ENCODE measurements at regions of chr17 and their contacts with region 1.

Region 1: GRCh38 chr17:7014261-7014994 is 2.0 kb downstream of the RNASEK start:
- DNase-seq: peak; percentile 98 to 99 (median 98)
- H3K4me3 ChIP-seq: peak overlapping the region; percentile 61 to 98
- H3K4me3 Mint-ChIP-seq: peak overlapping the region; percentile 92 to 98 (median 97)
- H3K27ac ChIP-seq: peak overlapping the region; percentile 96
- H3K27ac Mint-ChIP-seq: peak overlapping the region; percentile 98 to 100 (median 100)
- H3K4me1 ChIP-seq: peaks cover 69% of the 10 kb centered on the region
- H3K4me1 Mint-ChIP-seq: peaks cover 42 to 94% (median 61%) of the 10 kb centered on the region in 4 donors
- H3K27me3 ChIP-seq: no peaks in the 10 kb centered on the region
- H3K27me3 Mint-ChIP-seq: no peaks in the 10 kb centered on the region

Region 2: GRCh38 chr17:7035591-7036368 is 21.4 kb after region 1 on chr17 and contains the start of gene SLC16A13:
- CTCF ChIA-PET with region 1: interaction called, 4 read pairs
- POLR2A ChIA-PET with region 1: interaction called, 39 read pairs
- intact Hi-C with region 1: loop called (anchors 2 kb)
- DNase-seq: peak; percentile 97 to 100 (median 98)
- H3K4me3 ChIP-seq: peak within 1 kb of the TSS; percentile 32 to 81
- H3K4me3 Mint-ChIP-seq: peak within 1 kb of the TSS; percentile 90 to 96 (median 94)
- H3K27ac ChIP-seq: peak within 1 kb of the TSS; percentile 87
- H3K27ac Mint-ChIP-seq: peak within 1 kb of the TSS; percentile 97 to 99 (median 98)
- H3K4me1 ChIP-seq: peaks cover 65% of the 10 kb centered on the region
- H3K4me1 Mint-ChIP-seq: peaks cover 25 to 81% (median 49%) of the 10 kb centered on the region in 4 donors
- H3K27me3 ChIP-seq: no peaks in the 10 kb centered on the region
- H3K27me3 Mint-ChIP-seq: no peaks in the 10 kb centered on the region
- total RNA-seq, gene SLC16A13: 13.1 to 13.7 TPM

Measured in CD4-positive, alpha-beta memory T cell (primary cell).